Activated naive CD4-positive, alpha-beta T cell treated with anti-CD3 and anti-CD28 coated beads, Interleukin-2, amount 10 ng/mL, durations not matched to agents 7 days and 5 days (primary cell): ENCODE measurements at regions of chr17 and their contacts with region 1.

Region 1: GRCh38 chr17:5587438-5588032 is 3.2 kb upstream of the NLRP1 start:
- DNase-seq: peak; percentile 62
- H3K4me3 Mint-ChIP-seq: no peak overlapping the region
- H3K27ac Mint-ChIP-seq: no peak overlapping the region
- H3K4me1 Mint-ChIP-seq: peaks cover 43% of the 10 kb centered on the region
- H3K27me3 Mint-ChIP-seq: peaks cover 21% of the 10 kb centered on the region

Region 2: DNA sequence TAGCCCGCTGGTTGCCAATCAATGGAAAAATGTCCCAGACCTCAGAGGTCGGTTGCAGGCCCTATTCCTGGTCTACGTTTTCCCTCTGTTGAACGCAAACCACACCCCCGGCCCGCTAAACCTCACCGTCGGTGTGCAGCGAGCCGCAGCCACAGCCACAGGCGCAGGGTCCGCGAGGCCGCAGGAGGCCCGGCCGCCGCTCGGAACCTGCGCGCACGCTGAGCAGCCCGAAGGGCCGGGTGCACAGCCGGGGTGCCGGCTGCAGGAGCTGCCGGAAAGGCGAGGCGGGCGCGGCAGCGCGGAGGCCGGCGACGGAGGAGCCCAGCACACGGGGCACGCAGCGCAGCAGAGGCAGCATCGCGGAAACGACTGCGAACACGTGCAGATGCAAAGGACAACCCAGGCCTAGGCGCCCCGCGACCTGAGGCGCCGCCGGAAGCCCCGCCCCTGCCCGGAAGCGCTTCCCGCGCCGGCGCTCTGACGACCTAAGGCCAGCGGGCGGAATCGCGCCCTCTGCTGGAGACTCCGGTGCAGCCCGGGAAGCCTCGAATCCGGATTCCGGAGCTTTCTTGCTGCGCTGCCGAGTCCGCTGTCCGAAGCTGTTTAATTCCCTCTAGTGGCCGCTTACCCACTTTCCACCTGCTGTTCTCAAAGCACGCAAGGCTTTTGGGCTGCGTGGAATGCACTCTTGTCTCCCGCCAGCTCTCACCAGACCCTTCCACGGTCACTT is 148.7 kb before region 1 on chr17 and contains the start of gene C1QBP:
- CTCF ChIA-PET with region 1: no interaction called
- DNase-seq: peak; percentile 94
- H3K4me3 Mint-ChIP-seq: peak within 1 kb of the TSS; percentile 82
- H3K27ac Mint-ChIP-seq: peak within 1 kb of the TSS; percentile 90
- H3K4me1 Mint-ChIP-seq: peaks cover 43% of the 10 kb centered on the region
- H3K27me3 Mint-ChIP-seq: no peaks in the 10 kb centered on the region

Region 3: DNA sequence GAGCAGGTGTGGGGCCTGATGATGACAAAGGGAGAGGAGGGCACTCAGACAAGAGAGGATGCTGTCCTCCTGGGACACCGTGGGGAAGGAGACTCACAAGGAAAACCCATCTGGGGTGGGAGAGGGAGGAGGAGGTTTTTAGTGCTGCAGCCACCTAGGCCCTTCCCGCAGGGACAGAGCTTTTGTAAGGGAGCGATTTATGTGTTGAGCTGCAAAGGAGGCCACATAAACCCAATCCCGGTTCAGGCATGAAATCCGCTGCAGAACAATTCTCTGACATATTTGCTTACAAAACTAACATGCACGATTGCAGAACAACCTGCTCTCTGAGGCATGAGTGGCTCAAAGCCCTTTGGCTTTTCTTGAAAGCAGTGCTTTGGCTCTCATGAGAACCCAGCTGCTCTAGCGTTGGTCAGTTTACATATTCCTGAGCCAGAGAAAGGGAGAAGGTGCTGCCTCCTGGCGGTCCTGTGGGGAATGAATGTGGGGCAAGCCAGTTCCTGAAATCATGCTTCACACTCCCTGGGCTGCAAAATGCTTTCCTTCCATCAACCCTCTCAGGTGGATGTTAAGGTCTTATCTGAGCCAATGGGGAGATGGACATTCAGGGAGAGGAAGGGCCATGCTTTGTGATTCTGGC is 119.2 kb after region 1 on chr17:
- CTCF ChIA-PET with region 1: interaction called, 21 read pairs
- DNase-seq: peak; percentile 69
- H3K4me3 Mint-ChIP-seq: no peak overlapping the region
- H3K27ac Mint-ChIP-seq: no peak overlapping the region
- H3K4me1 Mint-ChIP-seq: no peaks in the 10 kb centered on the region
- H3K27me3 Mint-ChIP-seq: peaks cover 30% of the 10 kb centered on the region